ENCODE measurements at regions of chr3 and their contacts with region 1.

Region 1: GRCh38 chr3:1251282-1252060 is 158.6 kb downstream of the CNTN6 start:
- DNase-seq: no peak
- H3K4me3 ChIP-seq: no peak overlapping the region
- H3K27ac ChIP-seq: peak overlapping the region in 6 of 59 donors; percentile 24 to 46 (median 44)
- H3K27me3 ChIP-seq: no peaks in the 10 kb centered on the region
- CTCF ChIP-seq: peak in 1 of 56 donors; percentile 2

Region 2: DNA sequence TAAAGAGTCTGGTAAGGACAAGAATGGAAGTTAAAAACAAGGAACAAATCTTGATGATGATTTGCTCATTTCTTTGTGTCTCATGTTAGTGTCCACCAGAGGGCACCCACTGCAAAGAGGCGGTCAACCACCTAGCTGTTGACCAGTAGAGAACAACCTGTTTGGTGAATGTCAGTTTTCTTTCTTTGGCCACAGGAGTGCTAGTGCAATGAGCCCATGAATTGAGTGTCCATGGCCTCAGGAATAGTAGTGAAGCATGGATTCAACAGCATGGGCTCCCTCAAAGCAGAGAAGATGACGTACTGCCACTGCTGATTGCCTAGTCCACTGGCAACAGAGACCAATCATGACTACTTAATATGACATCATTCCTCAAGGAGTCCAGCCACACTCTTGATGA is 169.4 kb before region 1 on chr3:
- intact Hi-C with region 1: loop called in 1 of 2 experiments (anchors 10 kb)
- DNase-seq: peak in 7 of 10 donors; percentile 29 to 51 (median 47)
- H3K4me3 ChIP-seq: no peak overlapping the region
- H3K27ac ChIP-seq: no peak overlapping the region
- H3K27me3 ChIP-seq: no peaks in the 10 kb centered on the region
- CTCF ChIP-seq: peak in 55 of 56 donors; percentile 46 to 81 (median 70)

Region 3: GRCh38 chr3:1348547-1348946 is 97.1 kb after region 1 on chr3:
- intact Hi-C with region 1: no loop called
- DNase-seq: no peak
- H3K4me3 ChIP-seq: no peak overlapping the region
- H3K27ac ChIP-seq: no peak overlapping the region
- H3K27me3 ChIP-seq: no peaks in the 10 kb centered on the region
- CTCF ChIP-seq: no peak